CD8-positive, alpha-beta T cell (primary cell): ENCODE measurements at regions of chr11 and their contacts with region 1.

Region 1: GRCh38 chr11:11966826-11967668 is 41.4 kb downstream of the DKK3 start:
- DNase-seq: peak; percentile 46 to 76 (median 63)
- ATAC-seq: peak; percentile 97
- H3K4me3 ChIP-seq: no peak overlapping the region
- H3K4me3 Mint-ChIP-seq: no peak overlapping the region
- H3K27ac ChIP-seq: no peak overlapping the region
- H3K27ac Mint-ChIP-seq: no peak overlapping the region
- H3K4me1 ChIP-seq: no peaks in the 10 kb centered on the region
- H3K4me1 Mint-ChIP-seq: peaks cover 3% of the 10 kb centered on the region
- H3K27me3 ChIP-seq: no peaks in the 10 kb centered on the region
- H3K27me3 Mint-ChIP-seq: no peaks in the 10 kb centered on the region
- CTCF ChIP-seq: peak; percentile 78

Region 2: DNA sequence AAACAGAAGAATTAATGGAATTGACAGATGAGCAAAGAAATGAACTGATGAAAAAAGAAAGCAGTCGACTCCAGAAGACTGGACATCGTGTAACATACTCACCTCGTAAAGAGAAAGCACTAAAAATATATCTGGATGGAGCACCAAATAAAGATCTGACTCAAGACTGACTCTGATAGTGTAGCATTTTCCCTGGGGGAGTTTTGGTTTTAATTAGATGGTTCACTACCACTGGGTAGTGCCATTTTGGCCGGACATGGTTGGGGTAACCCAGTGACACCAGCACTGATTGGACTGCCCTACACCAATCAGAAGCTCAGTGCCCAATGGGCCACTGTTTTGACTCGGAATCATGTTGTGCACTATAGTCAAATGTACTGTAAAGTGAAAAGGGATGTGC is 11.0 kb before region 1 on chr11:
- CTCF ChIA-PET with region 1: interaction called, 21 read pairs
- POLR2A ChIA-PET with region 1: interaction called, 5 read pairs
- intact Hi-C with region 1: no loop called
- DNase-seq: no peak
- ATAC-seq: no peak
- H3K4me3 ChIP-seq: no peak overlapping the region
- H3K4me3 Mint-ChIP-seq: no peak overlapping the region
- H3K27ac ChIP-seq: no peak overlapping the region
- H3K27ac Mint-ChIP-seq: no peak overlapping the region
- H3K4me1 ChIP-seq: peaks cover 12% of the 10 kb centered on the region
- H3K4me1 Mint-ChIP-seq: peaks cover 21% of the 10 kb centered on the region
- H3K27me3 ChIP-seq: no peaks in the 10 kb centered on the region
- H3K27me3 Mint-ChIP-seq: no peaks in the 10 kb centered on the region
- CTCF ChIP-seq: no peak

Region 3: DNA sequence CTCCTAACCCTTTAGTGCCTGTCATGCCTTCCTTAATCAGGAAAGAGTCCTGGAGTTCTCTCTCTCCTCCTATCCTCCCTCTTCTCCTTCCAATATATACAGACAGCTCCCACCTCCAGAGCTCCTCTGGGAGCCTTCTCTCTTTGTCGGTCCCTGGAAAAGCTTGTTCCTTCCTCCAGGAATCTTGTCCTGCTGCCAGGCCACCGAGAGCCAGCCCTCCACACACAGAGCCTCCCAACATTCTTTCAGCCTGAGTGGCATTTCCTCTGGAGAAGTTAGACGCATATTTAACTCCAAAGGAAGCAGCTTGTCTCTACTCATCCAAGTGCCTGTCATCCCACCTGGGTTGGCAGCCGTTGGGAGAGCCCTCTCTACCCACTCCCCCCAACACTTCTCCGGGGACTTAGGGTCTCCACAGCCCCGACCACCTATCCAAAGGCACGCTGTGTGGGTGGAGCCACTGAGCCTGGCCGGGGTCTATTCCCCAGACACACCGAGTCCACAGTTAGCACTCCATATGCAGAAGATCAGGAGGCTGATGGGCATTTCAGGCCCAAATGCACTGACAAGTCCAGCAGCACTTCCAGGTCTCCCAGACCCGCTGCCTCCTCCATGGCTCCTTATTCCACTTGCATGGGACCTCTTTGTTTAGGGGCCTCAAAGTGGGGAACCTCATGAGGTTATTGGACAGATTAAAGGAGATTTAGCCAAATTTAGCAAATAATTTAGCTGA is 10.3 kb after region 1 on chr11:
- CTCF ChIA-PET with region 1: interaction called, 16 read pairs
- POLR2A ChIA-PET with region 1: no interaction called
- intact Hi-C with region 1: no loop called
- DNase-seq: peak in 2 of 9 experiments; percentile 2 to 35
- ATAC-seq: no peak
- H3K4me3 ChIP-seq: no peak overlapping the region
- H3K4me3 Mint-ChIP-seq: no peak overlapping the region
- H3K27ac ChIP-seq: no peak overlapping the region
- H3K27ac Mint-ChIP-seq: no peak overlapping the region
- H3K4me1 ChIP-seq: peaks cover 8% of the 10 kb centered on the region
- H3K4me1 Mint-ChIP-seq: peaks cover 9% of the 10 kb centered on the region
- H3K27me3 ChIP-seq: no peaks in the 10 kb centered on the region
- H3K27me3 Mint-ChIP-seq: no peaks in the 10 kb centered on the region
- CTCF ChIP-seq: no peak

Region 4: GRCh38 chr11:12001186-12001585 is 34.1 kb after region 1 on chr11:
- CTCF ChIA-PET with region 1: no interaction called
- POLR2A ChIA-PET with region 1: no interaction called
- intact Hi-C with region 1: no loop called
- DNase-seq: no peak
- ATAC-seq: no peak
- H3K4me3 ChIP-seq: no peak overlapping the region
- H3K4me3 Mint-ChIP-seq: no peak overlapping the region
- H3K27ac ChIP-seq: no peak overlapping the region
- H3K27ac Mint-ChIP-seq: no peak overlapping the region
- H3K4me1 ChIP-seq: peaks cover 3% of the 10 kb centered on the region
- H3K4me1 Mint-ChIP-seq: peaks cover 14% of the 10 kb centered on the region
- H3K27me3 ChIP-seq: no peaks in the 10 kb centered on the region
- H3K27me3 Mint-ChIP-seq: peaks cover 35% of the 10 kb centered on the region
- CTCF ChIP-seq: no peak